Activated CD8-positive, alpha-beta T cell treated with anti-CD3 and anti-CD28 coated beads for 36 hours (primary cell): ENCODE measurements at regions of chr5 and their contacts with region 1.

Region 1: GRCh38 chr5:154405078-154405792 is 40.6 kb upstream of the SAP30L start:
- DNase-seq: peak; percentile 86
- ATAC-seq: peak; percentile 100
- H3K4me3 Mint-ChIP-seq: peak overlapping the region; percentile 53
- H3K27ac Mint-ChIP-seq: no peak overlapping the region
- H3K4me1 Mint-ChIP-seq: peaks cover 7% of the 10 kb centered on the region
- H3K27me3 Mint-ChIP-seq: no peaks in the 10 kb centered on the region
- CTCF ChIP-seq: peak; percentile 89

Region 2: GRCh38 chr5:154058055-154059038 is 346.9 kb before region 1 on chr5:
- CTCF ChIA-PET with region 1: interaction called, 10 read pairs
- POLR2A ChIA-PET with region 1: no interaction called
- intact Hi-C with region 1: no loop called
- DNase-seq: peak; percentile 13
- ATAC-seq: peak; percentile 34
- H3K4me3 Mint-ChIP-seq: no peak overlapping the region
- H3K27ac Mint-ChIP-seq: peak overlapping the region; percentile 1
- H3K4me1 Mint-ChIP-seq: peaks cover 30% of the 10 kb centered on the region
- H3K27me3 Mint-ChIP-seq: no peaks in the 10 kb centered on the region
- CTCF ChIP-seq: no peak

Region 3: DNA sequence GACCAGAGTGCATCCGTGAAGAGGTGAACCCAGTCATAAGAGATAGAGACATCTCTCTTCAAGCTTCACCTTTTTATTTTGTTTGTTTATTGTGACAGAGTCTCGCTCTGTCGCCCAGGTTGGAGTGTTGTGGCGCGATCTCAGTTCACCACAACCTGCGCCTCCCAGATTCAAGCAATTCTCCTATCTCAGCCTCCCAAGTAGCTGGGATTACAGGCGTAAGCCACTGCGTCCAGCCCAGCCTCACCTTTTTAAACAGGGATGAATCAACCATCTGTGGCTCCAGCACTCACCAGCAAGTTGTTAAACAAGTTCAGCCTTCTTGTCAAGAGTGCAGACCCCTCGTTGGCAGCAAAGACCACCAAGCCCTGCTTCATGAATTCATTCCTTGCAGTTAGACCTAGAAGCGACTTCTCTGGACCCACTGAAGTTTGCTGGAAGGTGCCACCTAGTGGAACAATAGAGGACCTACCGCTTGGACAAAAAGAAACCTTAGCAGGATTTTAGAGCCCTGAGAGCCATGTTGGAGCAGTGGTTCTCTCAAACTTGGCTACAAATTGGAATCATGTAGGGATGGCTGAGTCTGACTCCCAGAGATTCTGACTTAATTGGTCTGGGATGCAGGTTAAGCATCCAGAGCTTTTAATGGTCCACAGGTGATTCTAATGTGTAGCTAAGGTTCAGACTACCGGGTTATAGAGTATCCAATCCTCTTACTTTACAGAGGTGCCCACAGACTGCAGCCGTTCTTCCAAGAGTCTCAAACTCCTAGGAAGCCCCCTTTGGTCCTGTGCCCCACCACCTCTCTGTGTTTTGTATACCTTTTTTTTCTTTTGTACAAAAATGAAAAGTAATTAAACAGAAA is 225.2 kb before region 1 on chr5:
- CTCF ChIA-PET with region 1: interaction called, 11 read pairs
- POLR2A ChIA-PET with region 1: interaction called, 3 read pairs
- intact Hi-C with region 1: no loop called
- DNase-seq: peak; percentile 48
- ATAC-seq: peak; percentile 97
- H3K4me3 Mint-ChIP-seq: no peak overlapping the region
- H3K27ac Mint-ChIP-seq: no peak overlapping the region
- H3K4me1 Mint-ChIP-seq: no peaks in the 10 kb centered on the region
- H3K27me3 Mint-ChIP-seq: peaks cover 8% of the 10 kb centered on the region
- CTCF ChIP-seq: peak; percentile 57

Region 4: GRCh38 chr5:154196955-154197652 is 208.1 kb before region 1 on chr5:
- CTCF ChIA-PET with region 1: interaction called, 26 read pairs
- POLR2A ChIA-PET with region 1: interaction called, 4 read pairs
- intact Hi-C with region 1: no loop called
- DNase-seq: no peak
- ATAC-seq: no peak
- H3K4me3 Mint-ChIP-seq: no peak overlapping the region
- H3K27ac Mint-ChIP-seq: peak overlapping the region; percentile 83
- H3K4me1 Mint-ChIP-seq: peaks cover 60% of the 10 kb centered on the region
- H3K27me3 Mint-ChIP-seq: no peaks in the 10 kb centered on the region
- CTCF ChIP-seq: no peak

Region 5: GRCh38 chr5:154311362-154311761 is 93.9 kb before region 1 on chr5:
- CTCF ChIA-PET with region 1: no interaction called
- POLR2A ChIA-PET with region 1: no interaction called
- intact Hi-C with region 1: no loop called
- DNase-seq: peak; percentile 40
- ATAC-seq: peak; percentile 79
- H3K4me3 Mint-ChIP-seq: no peak overlapping the region
- H3K27ac Mint-ChIP-seq: peak overlapping the region; percentile 54
- H3K4me1 Mint-ChIP-seq: peaks cover 35% of the 10 kb centered on the region
- H3K27me3 Mint-ChIP-seq: no peaks in the 10 kb centered on the region
- CTCF ChIP-seq: no peak

Region 6: GRCh38 chr5:154367101-154367500 is 38.1 kb before region 1 on chr5:
- CTCF ChIA-PET with region 1: no interaction called
- POLR2A ChIA-PET with region 1: no interaction called
- intact Hi-C with region 1: no loop called
- DNase-seq: no peak
- ATAC-seq: no peak
- H3K4me3 Mint-ChIP-seq: no peak overlapping the region
- H3K27ac Mint-ChIP-seq: no peak overlapping the region
- H3K4me1 Mint-ChIP-seq: no peaks in the 10 kb centered on the region
- H3K27me3 Mint-ChIP-seq: no peaks in the 10 kb centered on the region
- CTCF ChIP-seq: no peak

Region 7: GRCh38 chr5:154520861-154521453 is 115.7 kb after region 1 on chr5:
- CTCF ChIA-PET with region 1: no interaction called
- POLR2A ChIA-PET with region 1: no interaction called
- intact Hi-C with region 1: no loop called
- DNase-seq: peak; percentile 20
- ATAC-seq: no peak
- H3K4me3 Mint-ChIP-seq: no peak overlapping the region
- H3K27ac Mint-ChIP-seq: no peak overlapping the region
- H3K4me1 Mint-ChIP-seq: no peaks in the 10 kb centered on the region
- H3K27me3 Mint-ChIP-seq: peaks cover 48% of the 10 kb centered on the region
- CTCF ChIP-seq: peak; percentile 75